Panc1 (cell line): ENCODE measurements at regions of chr9 and their contacts with region 1.

Region 1: DNA sequence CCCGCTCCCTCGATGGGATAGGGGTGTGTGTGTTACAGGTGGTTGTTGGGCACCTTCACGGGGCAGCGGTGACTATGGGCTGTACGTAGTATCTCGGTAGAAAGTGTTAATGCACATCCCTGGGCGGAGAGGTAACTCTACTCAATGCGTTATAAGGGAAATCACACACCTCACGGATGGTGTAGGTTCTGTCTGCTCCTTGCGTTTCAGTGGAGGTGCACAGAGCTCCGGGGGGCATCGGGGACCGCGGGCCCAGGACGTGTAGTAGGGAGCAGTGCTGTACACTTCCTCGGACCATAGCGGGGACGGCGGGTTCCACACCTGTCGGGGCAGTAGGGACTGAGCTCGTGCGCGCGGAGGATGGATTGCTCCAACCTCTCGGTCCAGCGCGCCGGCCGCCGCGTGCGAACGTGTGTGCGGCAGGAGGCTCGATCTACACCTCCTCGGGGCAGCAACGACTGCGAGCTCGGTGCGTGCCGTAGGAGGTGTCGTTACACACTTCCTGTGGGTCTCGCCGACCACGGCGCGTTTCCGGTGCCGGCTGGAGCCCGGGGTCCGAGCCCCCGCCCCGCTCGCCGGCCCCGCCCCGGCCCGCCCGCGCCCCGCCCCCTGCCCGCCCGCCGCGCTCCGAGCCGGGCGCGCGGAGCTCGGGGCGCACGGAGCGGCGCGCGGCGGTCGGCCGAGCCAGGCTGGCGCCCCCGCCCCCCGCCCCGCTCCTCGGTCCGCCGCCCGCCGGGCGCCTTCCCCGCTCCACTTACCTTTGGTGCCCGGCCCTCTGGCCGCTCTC is at the start of gene KIAA1958:
- DNase-seq: no peak
- ATAC-seq: peak; percentile 93
- H3K4me3 ChIP-seq: peak within 1 kb of the TSS; percentile 75 to 89
- H3K27ac ChIP-seq: peak within 1 kb of the TSS; percentile 88
- H3K4me1 ChIP-seq: peaks cover 16% of the 10 kb centered on the region; the same call in 1 of the 2 replicates
- H3K27me3 ChIP-seq: no peaks in the 10 kb centered on the region
- CTCF ChIP-seq: no peak
- total RNA-seq, gene KIAA1958: 10.4 TPM

Region 2: DNA sequence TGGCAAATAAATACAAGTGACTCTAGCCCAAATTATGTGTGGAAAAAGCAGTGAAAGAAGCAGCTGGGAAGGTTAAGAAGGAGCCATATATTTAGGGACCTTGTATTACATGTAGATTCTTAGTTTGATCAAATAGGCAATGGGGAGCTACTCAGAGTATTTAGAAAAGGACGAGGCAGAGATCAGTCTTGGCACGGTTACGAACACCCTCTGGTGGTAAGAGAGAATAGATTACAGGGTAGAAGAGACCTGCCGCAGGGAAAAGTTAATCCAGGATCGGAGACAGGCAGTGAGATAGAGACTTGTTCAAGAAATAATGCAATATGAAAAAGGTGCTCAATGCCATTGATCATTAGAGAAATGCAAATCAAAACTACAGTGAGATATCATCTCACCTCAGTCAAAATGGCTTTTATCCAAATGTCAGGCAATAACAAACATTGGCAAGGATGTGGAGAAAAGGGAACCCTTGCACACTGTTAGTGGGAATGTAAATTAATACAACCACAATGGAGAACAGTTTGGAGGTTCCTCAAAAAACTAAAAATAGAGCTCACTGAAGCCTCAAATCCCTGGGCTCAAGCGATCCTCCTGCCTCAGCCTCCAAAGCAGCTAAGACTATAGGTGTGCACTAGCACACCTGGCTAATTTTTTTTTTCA is 219.5 kb after region 1 on chr9:
- CTCF ChIA-PET with region 1: interaction called, 4 read pairs
- POLR2A ChIA-PET with region 1: no interaction called
- in situ Hi-C with region 1: no loop called
- intact Hi-C with region 1: loop called (anchors 10 kb)
- DNase-seq: no peak
- ATAC-seq: peak; percentile 66; the same call in 1 of the 2 replicates
- H3K4me3 ChIP-seq: no peak overlapping the region
- H3K27ac ChIP-seq: no peak overlapping the region
- H3K4me1 ChIP-seq: no peaks in the 10 kb centered on the region
- H3K27me3 ChIP-seq: no peaks in the 10 kb centered on the region
- CTCF ChIP-seq: peak; percentile 42

Region 3: GRCh38 chr9:112793213-112793810 is 306.9 kb after region 1 on chr9:
- CTCF ChIA-PET with region 1: no interaction called
- POLR2A ChIA-PET with region 1: no interaction called
- in situ Hi-C with region 1: no loop called
- intact Hi-C with region 1: loop called (anchors 10 kb)
- DNase-seq: peak; percentile 69
- ATAC-seq: peak; percentile 96
- H3K4me3 ChIP-seq: no peak overlapping the region
- H3K27ac ChIP-seq: no peak overlapping the region
- H3K4me1 ChIP-seq: no peaks in the 10 kb centered on the region; the same call in 1 of the 2 replicates
- H3K27me3 ChIP-seq: no peaks in the 10 kb centered on the region
- CTCF ChIP-seq: peak; percentile 91